Left colon (tissue), 2 donors: ENCODE measurements at regions of chr17 and their contacts with region 1.

Region 1: GRCh38 chr17:78421484-78422266 is 43.2 kb downstream of the PGS1 start:
- DNase-seq: peak; percentile 60 to 79
- ATAC-seq: peak; percentile 83

Region 2: GRCh38 chr17:78289802-78290363 is 131.8 kb before region 1 on chr17:
- intact Hi-C with region 1: loop called (anchors 5 kb)
- DNase-seq: peak; percentile 79 to 84
- ATAC-seq: peak; percentile 99

Region 3: GRCh38 chr17:78360371-78361224 is 61.1 kb before region 1 on chr17:
- intact Hi-C with region 1: loop called in 1 of 2 experiments (anchors 5 kb)
- DNase-seq: peak; percentile 91 to 97
- ATAC-seq: peak; percentile 76